ENCODE measurements at regions of chr5 and their contacts with region 1.

Region 1: GRCh38 chr5:39217365-39218281 is 1.7 kb downstream of the FYB1 start:
- DNase-seq: peak; percentile 93
- H3K4me3 ChIP-seq: no peak overlapping the region
- H3K27ac ChIP-seq: peak overlapping the region in 3 of 4 donors; percentile 38 to 74 (median 73)
- H3K4me1 ChIP-seq: peaks cover 0 to 21% (median 13%) of the 10 kb centered on the region in 4 donors
- H3K27me3 ChIP-seq: no peaks in the 10 kb centered on the region
- CTCF ChIP-seq: peak; percentile 88 to 94 (median 90)
- EP300 ChIP-seq: no peak
- POLR2A ChIP-seq: no peak

Region 2: DNA sequence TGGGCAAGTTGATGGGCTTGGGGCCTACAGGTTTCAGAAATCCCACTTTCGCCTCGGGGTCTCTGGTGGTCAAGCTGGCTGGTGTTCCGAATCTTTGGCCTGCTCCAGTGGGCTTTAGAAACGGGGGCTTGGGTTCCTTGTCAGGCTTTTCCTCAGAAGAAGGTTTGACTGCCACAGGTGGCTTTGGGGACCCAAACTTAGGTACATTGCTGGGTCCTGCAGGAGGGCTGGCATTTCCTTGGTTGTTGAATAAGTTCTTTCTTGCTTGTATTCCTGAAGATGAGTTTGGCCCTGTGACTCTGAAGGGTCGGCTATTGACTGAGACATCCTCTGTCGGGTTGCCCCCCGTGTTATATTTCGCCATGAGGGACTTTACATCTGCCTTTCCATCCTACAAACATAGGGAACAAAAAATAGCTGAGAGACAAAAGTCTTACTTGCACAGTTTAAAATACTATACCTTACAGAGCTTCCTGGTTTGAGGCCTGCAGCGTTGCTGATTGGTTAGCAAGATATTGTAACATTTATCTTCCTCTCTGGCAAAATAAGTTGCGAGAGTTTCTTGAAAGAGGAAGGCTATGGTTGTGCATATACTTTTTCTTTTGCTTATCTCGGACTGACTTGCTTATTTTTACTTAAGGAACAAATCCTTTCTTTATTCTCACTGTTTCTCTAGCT is 14.9 kb before region 1 on chr5:
- intact Hi-C with region 1: no loop called
- DNase-seq: no peak
- H3K4me3 ChIP-seq: no peak overlapping the region
- H3K27ac ChIP-seq: no peak overlapping the region
- H3K4me1 ChIP-seq: no peaks in the 10 kb centered on the region
- H3K27me3 ChIP-seq: no peaks in the 10 kb centered on the region
- CTCF ChIP-seq: no peak
- EP300 ChIP-seq: no peak
- POLR2A ChIP-seq: no peak

Region 3: GRCh38 chr5:39283231-39283818 is 65.7 kb after region 1 on chr5:
- intact Hi-C with region 1: loop called (anchors 2 kb)
- DNase-seq: no peak
- H3K4me3 ChIP-seq: no peak overlapping the region
- H3K27ac ChIP-seq: no peak overlapping the region
- H3K4me1 ChIP-seq: no peaks in the 10 kb centered on the region
- H3K27me3 ChIP-seq: no peaks in the 10 kb centered on the region
- CTCF ChIP-seq: peak in 3 of 4 experiments; percentile 29 to 51 (median 42)
- EP300 ChIP-seq: no peak
- POLR2A ChIP-seq: no peak

Region 4: GRCh38 chr5:39547553-39548154 is 330.0 kb after region 1 on chr5:
- intact Hi-C with region 1: loop called (anchors 5 kb)
- DNase-seq: no peak
- H3K4me3 ChIP-seq: peak overlapping the region in 1 of 4 donors; percentile 11
- H3K27ac ChIP-seq: peak overlapping the region in 2 of 4 donors; percentile 33 to 55
- H3K4me1 ChIP-seq: peaks cover 0 to 43% (median 17%) of the 10 kb centered on the region in 4 donors
- H3K27me3 ChIP-seq: no peaks in the 10 kb centered on the region
- CTCF ChIP-seq: peak; percentile 56 to 72 (median 62)
- EP300 ChIP-seq: no peak
- POLR2A ChIP-seq: no peak

Region 5: GRCh38 chr5:39570403-39571027 is 352.9 kb after region 1 on chr5:
- intact Hi-C with region 1: loop called (anchors 2 kb)
- DNase-seq: no peak
- H3K4me3 ChIP-seq: no peak overlapping the region
- H3K27ac ChIP-seq: no peak overlapping the region
- H3K4me1 ChIP-seq: peaks cover 0 to 5% (median 2%) of the 10 kb centered on the region in 4 donors
- H3K27me3 ChIP-seq: no peaks in the 10 kb centered on the region
- CTCF ChIP-seq: peak; percentile 38 to 79 (median 62)
- EP300 ChIP-seq: no peak
- POLR2A ChIP-seq: no peak

Measured in sigmoid colon (tissue), 7 donors.